Astrocyte of the cerebellum (primary cell): ENCODE measurements at regions of chr3 and their contacts with region 1.

Region 1: DNA sequence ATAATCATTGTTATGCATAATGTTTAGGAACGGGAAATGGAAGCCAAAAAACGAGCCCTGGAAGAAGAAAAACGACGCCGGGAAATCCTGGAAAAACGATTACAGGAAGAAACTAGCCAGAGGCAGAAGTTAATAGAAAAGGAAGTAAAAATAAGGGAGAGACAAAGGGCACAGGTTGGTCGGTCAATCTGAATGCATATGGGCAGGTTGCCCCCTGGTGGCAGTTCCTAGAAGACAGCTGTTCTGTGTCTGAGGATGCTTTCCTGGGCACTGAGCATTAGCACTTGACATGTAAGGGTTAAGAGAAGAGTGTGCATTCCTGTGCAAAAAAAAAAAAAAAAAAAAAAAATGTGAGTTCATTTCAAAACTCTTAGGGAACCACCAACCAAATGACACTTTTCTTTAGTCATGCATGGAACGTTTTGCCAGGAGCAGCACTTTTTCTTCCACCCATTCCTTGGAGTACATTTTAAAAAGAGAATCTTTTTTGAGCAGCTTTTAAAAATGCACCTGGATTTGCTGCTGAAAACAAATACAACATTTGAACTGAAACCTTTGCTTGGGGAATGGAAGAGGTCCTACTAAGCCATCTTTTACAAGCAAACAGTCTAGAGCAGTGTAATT is 11.1 kb upstream of the ABHD10 start:
- DNase-seq: peak; percentile 68
- H3K4me3 ChIP-seq: no peak overlapping the region
- CTCF ChIP-seq: peak; percentile 83

Region 2: GRCh38 chr3:111547631-111548030 is 420.1 kb before region 1 on chr3:
- in situ Hi-C with region 1: no loop called
- DNase-seq: no peak
- H3K4me3 ChIP-seq: no peak overlapping the region
- CTCF ChIP-seq: no peak

Region 3: GRCh38 chr3:111717601-111718000 is 250.2 kb before region 1 on chr3:
- in situ Hi-C with region 1: loop called (anchors 25 kb)
- DNase-seq: peak; percentile 83
- H3K4me3 ChIP-seq: no peak overlapping the region
- CTCF ChIP-seq: peak; percentile 84

Region 4: GRCh38 chr3:111859974-111860859 is 107.5 kb before region 1 on chr3:
- in situ Hi-C with region 1: loop called (anchors 5 kb)
- DNase-seq: peak; percentile 92
- H3K4me3 ChIP-seq: peak overlapping the region; percentile 79
- CTCF ChIP-seq: peak; percentile 65

Region 5: GRCh38 chr3:111917300-111917699 is 50.5 kb before region 1 on chr3:
- in situ Hi-C with region 1: loop called (anchors 5 kb)
- DNase-seq: no peak
- H3K4me3 ChIP-seq: no peak overlapping the region
- CTCF ChIP-seq: no peak

Region 6: GRCh38 chr3:111932946-111933345 is 34.8 kb before region 1 on chr3:
- in situ Hi-C with region 1: no loop called
- DNase-seq: no peak
- H3K4me3 ChIP-seq: no peak overlapping the region
- CTCF ChIP-seq: no peak

Region 7: DNA sequence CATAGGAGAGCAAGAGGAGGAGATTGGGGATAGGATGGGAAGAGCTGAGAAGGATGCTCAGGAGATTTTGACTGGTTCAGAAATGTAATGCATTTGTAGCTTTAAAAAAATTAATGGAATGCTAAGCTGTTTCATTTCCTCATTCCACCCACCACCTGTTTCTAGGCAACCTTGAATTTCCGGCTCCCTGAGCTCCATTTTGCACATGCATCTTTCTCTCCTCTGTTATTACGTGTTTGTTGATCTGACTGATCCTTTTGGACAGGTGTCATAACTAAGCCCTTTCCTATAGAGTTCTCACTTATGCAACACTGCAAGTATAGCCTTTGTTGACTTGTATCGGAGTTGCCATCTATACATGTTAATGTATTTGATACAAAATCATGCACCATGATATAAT is 71.1 kb after region 1 on chr3:
- in situ Hi-C with region 1: no loop called
- DNase-seq: no peak
- H3K4me3 ChIP-seq: no peak overlapping the region
- CTCF ChIP-seq: no peak